Ascending aorta (tissue), 2 donors: ENCODE measurements at regions of chr3 and their contacts with region 1.

Region 1: GRCh38 chr3:9396700-9397521 is 504 bp upstream of the SETD5 start:
- DNase-seq: peak; percentile 97 to 99
- H3K4me3 ChIP-seq: peak overlapping the region; percentile 81 to 89
- H3K27ac ChIP-seq: peak overlapping the region; percentile 100
- H3K4me1 ChIP-seq: peaks cover 12 to 54% of the 10 kb centered on the region in 2 donors
- H3K27me3 ChIP-seq: no peaks in the 10 kb centered on the region
- CTCF ChIP-seq: no peak

Region 2: GRCh38 chr3:9362731-9363530 is 34.0 kb before region 1 on chr3 and contains the start of gene THUMPD3:
- intact Hi-C with region 1: loop called (anchors 1 kb)
- DNase-seq: peak; percentile 74 to 95
- H3K4me3 ChIP-seq: peak within 1 kb of the TSS; percentile 66 to 75
- H3K27ac ChIP-seq: peak within 1 kb of the TSS; percentile 80 to 94
- H3K4me1 ChIP-seq: peaks cover 0 to 17% of the 10 kb centered on the region in 2 donors
- H3K27me3 ChIP-seq: no peaks in the 10 kb centered on the region
- CTCF ChIP-seq: no peak
- total RNA-seq, gene THUMPD3: 24.4 TPM

Region 3: DNA sequence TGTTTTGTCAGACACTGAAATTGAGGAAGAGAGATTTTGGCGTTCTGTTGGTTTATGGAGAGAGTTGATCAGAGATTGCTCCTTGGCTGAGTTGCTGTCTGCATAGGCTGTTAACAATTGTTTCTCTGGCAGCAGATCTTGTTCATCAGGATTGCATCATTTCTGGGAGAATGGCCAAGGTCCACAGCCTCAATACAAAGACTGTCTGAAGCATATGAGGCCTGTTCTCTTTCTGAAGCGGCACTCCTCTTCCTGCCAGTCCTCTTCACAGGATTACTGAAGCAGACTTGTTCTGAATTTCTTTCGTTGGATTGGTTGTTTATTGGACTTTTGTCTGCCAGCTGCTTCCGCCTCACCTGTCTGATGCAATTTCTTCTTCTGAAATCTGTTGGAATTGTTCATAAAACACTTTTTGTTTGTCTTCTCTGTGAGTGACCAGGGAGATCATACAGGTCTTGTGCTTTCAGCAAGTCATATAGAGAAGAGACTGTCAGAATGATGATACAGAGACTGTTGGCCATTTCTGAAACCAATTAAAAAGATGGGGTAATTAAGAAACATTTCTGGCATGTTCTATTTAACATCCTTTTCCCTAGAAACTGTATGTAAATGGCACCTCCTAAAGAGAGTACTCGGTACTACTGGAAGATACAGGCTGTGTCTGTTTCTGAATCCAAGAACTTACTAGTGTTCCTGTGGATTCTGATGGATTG is 26.0 kb after region 1 on chr3:
- intact Hi-C with region 1: loop called (anchors 1 kb)
- DNase-seq: peak; percentile 14 to 93
- H3K4me3 ChIP-seq: peak overlapping the region; percentile 26 to 42
- H3K27ac ChIP-seq: peak overlapping the region; percentile 71 to 82
- H3K4me1 ChIP-seq: peaks cover 5 to 35% of the 10 kb centered on the region in 2 donors
- H3K27me3 ChIP-seq: no peaks in the 10 kb centered on the region
- CTCF ChIP-seq: peak in 2 of 3 experiments; percentile 41 to 66

Region 4: DNA sequence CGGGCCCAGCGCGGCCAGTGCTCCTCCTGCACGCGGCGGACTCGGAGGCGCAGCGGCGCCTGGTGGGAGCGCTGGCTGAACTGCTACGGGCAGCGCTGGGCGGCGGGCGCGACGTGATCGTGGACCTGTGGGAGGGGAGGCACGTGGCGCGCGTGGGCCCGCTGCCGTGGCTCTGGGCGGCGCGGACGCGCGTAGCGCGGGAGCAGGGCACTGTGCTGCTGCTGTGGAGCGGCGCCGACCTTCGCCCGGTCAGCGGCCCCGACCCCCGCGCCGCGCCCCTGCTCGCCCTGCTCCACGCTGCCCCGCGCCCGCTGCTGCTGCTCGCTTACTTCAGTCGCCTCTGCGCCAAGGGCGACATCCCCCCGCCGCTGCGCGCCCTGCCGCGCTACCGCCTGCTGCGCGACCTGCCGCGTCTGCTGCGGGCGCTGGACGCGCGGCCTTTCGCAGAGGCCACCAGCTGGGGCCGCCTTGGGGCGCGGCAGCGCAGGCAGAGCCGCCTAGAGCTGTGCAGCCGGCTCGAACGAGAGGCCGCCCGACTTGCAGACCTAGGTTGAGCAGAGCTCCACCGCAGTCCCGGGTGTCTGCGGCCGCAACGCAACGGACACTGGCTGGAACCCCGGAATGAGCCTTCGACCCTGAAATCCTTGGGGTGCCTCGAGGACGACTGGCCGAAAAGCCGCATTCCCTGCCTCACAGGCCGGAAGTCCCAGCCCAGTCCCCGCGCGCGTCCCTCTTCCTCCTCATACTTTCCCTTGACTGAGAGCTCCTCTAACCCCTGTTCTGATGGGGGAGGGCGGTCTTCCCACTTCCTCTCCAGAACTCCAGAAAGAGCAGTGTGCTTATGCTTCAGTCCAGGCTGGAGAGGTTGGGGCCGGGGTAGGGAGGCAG is 518.6 kb after region 1 on chr3:
- intact Hi-C with region 1: loop called (anchors 10 kb)
- DNase-seq: peak in 1 of 2 donors; percentile 85
- H3K4me3 ChIP-seq: peak overlapping the region; percentile 62 to 89
- H3K27ac ChIP-seq: peak overlapping the region; percentile 79 to 86
- H3K4me1 ChIP-seq: peaks cover 22 to 32% of the 10 kb centered on the region in 2 donors
- H3K27me3 ChIP-seq: no peaks in the 10 kb centered on the region
- CTCF ChIP-seq: peak in 2 of 3 experiments; percentile 32 to 56